H1 (cell line): ENCODE measurements at regions of chr9 and their contacts with region 1.

Region 1: GRCh38 chr9:36798350-36799065 is 225.8 kb downstream of the MELK start:
- DNase-seq: no peak
- H3K4me3 ChIP-seq: no peak overlapping the region
- H3K27ac ChIP-seq: no peak overlapping the region
- H3K4me1 ChIP-seq: peaks cover 0 to 5% (median 0%) of the 10 kb centered on the region in 4 experiments; a peak in 2 of 7 replicates
- H3K27me3 ChIP-seq: no peaks in the 10 kb centered on the region
- CTCF ChIP-seq: peak in 2 of 3 experiments; percentile 44 to 59; a peak in 3 of 4 replicates
- EP300 ChIP-seq: no peak
- POLR2A ChIP-seq: no peak
- RAD21 ChIP-seq: peak; percentile 69 to 79

Region 2: GRCh38 chr9:36867672-36868471 is 69.4 kb after region 1 on chr9:
- CTCF ChIA-PET with region 1: interaction called, 63 read pairs
- POLR2A ChIA-PET with region 1: no interaction called
- DNase-seq: no peak
- H3K4me3 ChIP-seq: no peak overlapping the region
- H3K27ac ChIP-seq: no peak overlapping the region
- H3K4me1 ChIP-seq: peaks cover 0 to 15% (median 4%) of the 10 kb centered on the region in 4 experiments; a peak in 6 of 7 replicates
- H3K27me3 ChIP-seq: peaks cover 0 to 24% (median 16%) of the 10 kb centered on the region in 4 experiments; a peak in 4 of 7 replicates
- CTCF ChIP-seq: no peak
- EP300 ChIP-seq: no peak
- POLR2A ChIP-seq: no peak
- RAD21 ChIP-seq: no peak